ENCODE measurements at regions of chr4 and their contacts with region 1.

Region 1: DNA sequence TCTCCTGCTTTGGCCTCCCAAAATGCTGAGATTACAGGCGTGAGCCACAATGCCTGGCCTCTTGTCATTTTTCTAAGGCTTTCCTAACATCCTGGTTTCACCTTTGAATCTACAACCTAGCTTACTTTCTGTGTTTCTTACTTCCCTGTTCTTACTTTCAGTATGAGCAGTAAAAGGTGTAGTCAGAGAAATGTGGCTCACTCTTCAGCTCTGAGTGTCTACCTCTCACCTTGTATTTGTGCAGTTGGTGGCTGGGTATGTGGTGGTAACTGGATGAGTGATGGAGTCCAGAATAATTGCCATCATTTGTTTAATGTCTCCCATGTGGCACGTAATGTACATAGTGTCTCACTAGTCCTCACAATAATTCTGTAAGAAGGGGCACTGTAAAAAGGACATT is 19.1 kb upstream of the CXCL11 start:
- DNase-seq: peak; percentile 58
- H3K4me3 Mint-ChIP-seq: no peak overlapping the region
- H3K27ac Mint-ChIP-seq: no peak overlapping the region
- H3K4me1 Mint-ChIP-seq: peaks cover 40% of the 10 kb centered on the region
- H3K27me3 Mint-ChIP-seq: peaks cover 30% of the 10 kb centered on the region

Region 2: GRCh38 chr4:75673027-75673958 is 381.7 kb before region 1 on chr4 and contains the start of gene G3BP2:
- CTCF ChIA-PET with region 1: no interaction called
- intact Hi-C with region 1: loop called (anchors 10 kb)
- DNase-seq: peak; percentile 99
- H3K4me3 Mint-ChIP-seq: peak within 1 kb of the TSS; percentile 97
- H3K27ac Mint-ChIP-seq: peak within 1 kb of the TSS; percentile 99
- H3K4me1 Mint-ChIP-seq: peaks cover 39% of the 10 kb centered on the region
- H3K27me3 Mint-ChIP-seq: no peaks in the 10 kb centered on the region
- total RNA-seq, gene G3BP2: 134 to 144 TPM

Region 3: GRCh38 chr4:76011700-76012387 is 43.2 kb before region 1 on chr4:
- CTCF ChIA-PET with region 1: no interaction called
- intact Hi-C with region 1: loop called (anchors 1 kb)
- DNase-seq: peak; percentile 40
- H3K4me3 Mint-ChIP-seq: no peak overlapping the region
- H3K27ac Mint-ChIP-seq: no peak overlapping the region
- H3K4me1 Mint-ChIP-seq: peaks cover 6% of the 10 kb centered on the region
- H3K27me3 Mint-ChIP-seq: peaks cover 9% of the 10 kb centered on the region

Region 4: GRCh38 chr4:76036855-76037254 is 18.2 kb before region 1 on chr4:
- CTCF ChIA-PET with region 1: no interaction called
- intact Hi-C with region 1: loop called (anchors 1 kb)
- DNase-seq: no peak
- H3K4me3 Mint-ChIP-seq: no peak overlapping the region
- H3K27ac Mint-ChIP-seq: no peak overlapping the region
- H3K4me1 Mint-ChIP-seq: peaks cover 4% of the 10 kb centered on the region
- H3K27me3 Mint-ChIP-seq: peaks cover 4% of the 10 kb centered on the region

Region 5: DNA sequence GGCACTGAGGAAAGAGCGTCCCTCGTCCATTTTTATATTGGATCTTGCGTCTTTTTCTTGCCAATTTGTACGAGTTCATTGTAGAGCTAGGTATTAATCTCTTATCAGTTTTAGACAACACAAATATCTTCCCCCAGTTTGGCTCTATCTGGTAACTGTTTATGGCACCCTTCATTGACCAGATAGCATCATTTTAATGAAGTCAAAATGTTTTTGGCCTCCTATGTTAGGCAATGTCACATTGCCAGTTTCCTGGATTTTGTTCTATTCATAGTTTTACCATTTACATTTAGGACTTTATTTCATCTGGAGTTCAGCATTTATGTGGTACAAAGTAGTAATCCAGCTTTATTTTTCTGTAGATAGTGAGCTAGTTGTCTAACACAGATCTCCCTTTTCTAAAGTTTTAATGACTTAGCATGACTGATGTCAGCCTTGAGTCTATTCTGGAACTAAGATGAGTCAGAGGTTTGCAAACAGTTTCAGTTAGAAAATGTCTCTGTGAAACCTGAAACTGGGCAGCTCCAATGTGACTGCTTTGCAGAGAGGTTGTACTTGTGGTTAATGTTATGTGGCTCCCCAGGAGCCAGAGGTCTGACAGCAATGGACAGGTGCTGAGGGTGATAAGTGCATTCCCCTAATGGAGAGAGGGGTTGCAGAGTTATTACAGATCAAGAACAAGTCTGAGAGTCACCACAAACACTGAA is 246.2 kb after region 1 on chr4:
- CTCF ChIA-PET with region 1: no interaction called
- intact Hi-C with region 1: loop called (anchors 1 kb)
- DNase-seq: peak; percentile 60
- H3K4me3 Mint-ChIP-seq: no peak overlapping the region
- H3K27ac Mint-ChIP-seq: no peak overlapping the region
- H3K4me1 Mint-ChIP-seq: peaks cover 23% of the 10 kb centered on the region
- H3K27me3 Mint-ChIP-seq: peaks cover 4% of the 10 kb centered on the region

Region 6: GRCh38 chr4:76738086-76738931 is 683.3 kb after region 1 on chr4:
- CTCF ChIA-PET with region 1: no interaction called
- intact Hi-C with region 1: loop called (anchors 5 kb)
- DNase-seq: peak; percentile 80
- H3K4me3 Mint-ChIP-seq: no peak overlapping the region
- H3K27ac Mint-ChIP-seq: peak overlapping the region; percentile 71
- H3K4me1 Mint-ChIP-seq: peaks cover 16% of the 10 kb centered on the region
- H3K27me3 Mint-ChIP-seq: no peaks in the 10 kb centered on the region

Region 7: DNA sequence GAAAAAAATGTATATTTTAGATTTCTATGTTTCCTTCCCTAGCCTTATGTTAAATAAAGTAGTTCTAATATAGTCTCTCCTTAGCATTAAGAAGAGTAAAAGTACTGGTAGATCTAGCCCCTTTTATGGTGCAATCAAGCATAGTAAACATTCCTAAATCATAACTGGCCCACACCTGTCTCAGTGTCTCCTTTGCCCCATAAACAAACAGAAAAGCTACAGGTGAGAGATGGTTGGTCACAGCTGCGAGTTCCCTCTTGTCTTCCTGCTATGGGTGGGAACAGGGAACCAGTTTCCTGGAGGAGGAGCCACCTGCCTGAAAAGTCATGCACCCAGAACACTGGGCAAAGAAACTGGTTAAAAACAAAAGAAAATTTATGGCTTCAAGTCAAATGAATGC is 826.4 kb after region 1 on chr4:
- CTCF ChIA-PET with region 1: no interaction called
- intact Hi-C with region 1: no loop called
- DNase-seq: no peak
- H3K4me3 Mint-ChIP-seq: no peak overlapping the region
- H3K27ac Mint-ChIP-seq: no peak overlapping the region
- H3K4me1 Mint-ChIP-seq: no peaks in the 10 kb centered on the region
- H3K27me3 Mint-ChIP-seq: peaks cover 7% of the 10 kb centered on the region

Region 8: GRCh38 chr4:77075869-77076799 is 1021.1 kb after region 1 on chr4 and contains the start of gene CCNI:
- CTCF ChIA-PET with region 1: no interaction called
- intact Hi-C with region 1: loop called (anchors 5 kb)
- DNase-seq: peak; percentile 93
- H3K4me3 Mint-ChIP-seq: peak within 1 kb of the TSS; percentile 99
- H3K27ac Mint-ChIP-seq: peak within 1 kb of the TSS; percentile 100
- H3K4me1 Mint-ChIP-seq: peaks cover 40% of the 10 kb centered on the region
- H3K27me3 Mint-ChIP-seq: no peaks in the 10 kb centered on the region
- total RNA-seq, gene CCNI: 211 to 218 TPM